ENCODE measurements at regions of chr9 and their contacts with region 1.

Region 1: GRCh38 chr9:69193685-69194032 is 19.6 kb downstream of the TJP2 start:
- DNase-seq: peak; percentile 35
- H3K4me3 ChIP-seq: no peak overlapping the region
- H3K27ac ChIP-seq: no peak overlapping the region
- H3K4me1 ChIP-seq: peaks cover 14% of the 10 kb centered on the region
- H3K27me3 ChIP-seq: no peaks in the 10 kb centered on the region
- CTCF ChIP-seq: no peak
- POLR2A ChIP-seq: no peak

Region 2: GRCh38 chr9:69073103-69073502 is 120.6 kb before region 1 on chr9:
- CTCF ChIA-PET with region 1: interaction called, 10 read pairs
- POLR2A ChIA-PET with region 1: no interaction called
- dilution Hi-C with region 1: loop called (anchors 10 kb)
- intact Hi-C with region 1: no loop called
- DNase-seq: no peak
- H3K4me3 ChIP-seq: no peak overlapping the region
- H3K27ac ChIP-seq: no peak overlapping the region
- H3K4me1 ChIP-seq: no peaks in the 10 kb centered on the region
- H3K27me3 ChIP-seq: no peaks in the 10 kb centered on the region
- CTCF ChIP-seq: no peak
- POLR2A ChIP-seq: no peak

Region 3: GRCh38 chr9:69131682-69132081 is 62.0 kb before region 1 on chr9:
- CTCF ChIA-PET with region 1: interaction called, 21 read pairs
- POLR2A ChIA-PET with region 1: interaction called, 3 read pairs
- dilution Hi-C with region 1: no loop called
- intact Hi-C with region 1: no loop called
- DNase-seq: peak; percentile 53
- H3K4me3 ChIP-seq: no peak overlapping the region
- H3K27ac ChIP-seq: peak overlapping the region; percentile 16
- H3K4me1 ChIP-seq: peaks cover 29% of the 10 kb centered on the region
- H3K27me3 ChIP-seq: no peaks in the 10 kb centered on the region
- CTCF ChIP-seq: no peak
- POLR2A ChIP-seq: no peak

Region 4: GRCh38 chr9:69149321-69149807 is 44.3 kb before region 1 on chr9:
- CTCF ChIA-PET with region 1: interaction called, 27 read pairs
- POLR2A ChIA-PET with region 1: no interaction called
- dilution Hi-C with region 1: no loop called
- intact Hi-C with region 1: loop called (anchors 1 kb)
- DNase-seq: peak; percentile 96
- H3K4me3 ChIP-seq: peak overlapping the region in 1 of 3 experiments; percentile 45
- H3K27ac ChIP-seq: peak overlapping the region; percentile 51
- H3K4me1 ChIP-seq: peaks cover 22% of the 10 kb centered on the region
- H3K27me3 ChIP-seq: no peaks in the 10 kb centered on the region
- CTCF ChIP-seq: peak; percentile 21 to 49
- POLR2A ChIP-seq: peak; percentile 47

Region 5: DNA sequence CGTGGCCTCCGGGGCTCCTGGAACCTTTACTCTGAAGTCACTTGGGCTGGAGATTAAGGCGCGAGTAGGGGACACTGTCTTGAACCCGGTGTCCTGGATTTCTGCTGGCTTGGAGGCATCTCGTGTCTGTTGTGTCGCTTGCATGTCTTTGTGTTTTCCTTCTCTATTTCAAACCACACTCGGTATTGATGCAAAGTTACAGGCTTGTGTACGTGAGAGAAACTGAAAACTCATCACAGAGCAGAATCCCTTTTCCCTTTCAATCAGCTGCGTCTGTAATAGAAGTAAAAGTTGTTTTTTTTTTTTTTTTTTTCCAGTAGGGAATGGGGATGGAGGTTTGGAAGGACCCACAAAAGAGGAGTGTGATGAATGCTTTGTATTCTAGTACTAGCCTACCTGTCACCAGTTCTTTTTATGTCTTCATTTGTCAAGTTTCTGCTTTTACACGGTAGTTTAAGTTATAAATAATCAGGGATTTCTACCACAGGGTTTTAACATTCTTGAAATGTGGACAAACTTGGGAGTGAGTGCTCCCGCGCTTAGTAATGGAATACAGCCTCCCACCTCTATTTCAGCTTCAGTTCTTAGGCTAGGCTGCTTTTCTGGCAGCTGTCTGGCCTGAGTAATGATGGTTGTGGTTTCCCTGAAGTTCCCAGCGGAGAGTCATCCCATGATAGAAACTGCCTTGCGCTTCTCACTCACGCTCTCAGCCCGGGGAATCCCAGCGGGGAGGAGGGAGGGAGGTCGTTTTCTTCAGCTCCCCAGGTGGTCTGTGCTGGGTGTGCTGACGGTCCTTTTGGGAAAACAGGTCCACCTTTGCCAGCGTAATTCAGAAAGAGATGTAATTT is 18.8 kb before region 1 on chr9:
- CTCF ChIA-PET with region 1: interaction called, 23 read pairs
- POLR2A ChIA-PET with region 1: interaction called, 3 read pairs
- dilution Hi-C with region 1: no loop called
- intact Hi-C with region 1: no loop called
- DNase-seq: peak; percentile 57
- H3K4me3 ChIP-seq: peak overlapping the region; percentile 60 to 73 (median 64)
- H3K27ac ChIP-seq: peak overlapping the region; percentile 81
- H3K4me1 ChIP-seq: peaks cover 70% of the 10 kb centered on the region
- H3K27me3 ChIP-seq: no peaks in the 10 kb centered on the region
- CTCF ChIP-seq: no peak
- POLR2A ChIP-seq: no peak